ENCODE measurements at regions of chr19 and their contacts with region 1.

Region 1: GRCh38 chr19:39532233-39533002 is at the start of gene EID2B:
- DNase-seq: peak; percentile 91
- H3K4me3 ChIP-seq: peak within 1 kb of the TSS; percentile 65 to 85
- H3K27ac ChIP-seq: peak within 1 kb of the TSS; percentile 71 to 76
- H3K4me1 ChIP-seq: peaks cover 5% of the 10 kb centered on the region
- H3K27me3 ChIP-seq: no peaks in the 10 kb centered on the region
- CTCF ChIP-seq: peak; percentile 93 to 100 (median 99)
- POLR2A ChIP-seq: peak; percentile 62
- total RNA-seq, gene EID2B: 2.6 to 4.5 TPM

Region 2: DNA sequence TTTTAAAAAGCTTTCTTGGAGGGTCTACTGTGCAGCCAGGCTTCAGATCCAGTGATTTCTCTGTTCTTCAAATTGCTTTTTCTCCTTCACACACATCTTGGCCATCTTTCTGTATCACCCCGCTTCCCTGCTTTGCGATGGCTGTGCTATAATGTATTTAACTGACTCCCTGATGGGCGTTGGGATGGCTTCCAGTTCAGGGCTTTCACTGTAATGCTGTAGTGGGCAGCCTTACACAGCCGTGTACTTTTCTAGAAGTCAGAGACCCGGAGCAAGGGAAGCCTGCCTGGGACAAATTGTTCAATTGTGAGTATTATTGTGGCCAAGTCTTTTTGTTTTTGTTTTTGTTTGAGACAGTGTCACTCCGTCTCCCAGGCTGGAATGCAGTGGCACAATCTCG is 426.2 kb before region 1 on chr19:
- intact Hi-C with region 1: loop called (anchors 5 kb)
- DNase-seq: no peak
- H3K4me3 ChIP-seq: no peak overlapping the region
- H3K27ac ChIP-seq: no peak overlapping the region
- H3K4me1 ChIP-seq: no peaks in the 10 kb centered on the region
- H3K27me3 ChIP-seq: no peaks in the 10 kb centered on the region
- CTCF ChIP-seq: no peak
- POLR2A ChIP-seq: no peak

Region 3: DNA sequence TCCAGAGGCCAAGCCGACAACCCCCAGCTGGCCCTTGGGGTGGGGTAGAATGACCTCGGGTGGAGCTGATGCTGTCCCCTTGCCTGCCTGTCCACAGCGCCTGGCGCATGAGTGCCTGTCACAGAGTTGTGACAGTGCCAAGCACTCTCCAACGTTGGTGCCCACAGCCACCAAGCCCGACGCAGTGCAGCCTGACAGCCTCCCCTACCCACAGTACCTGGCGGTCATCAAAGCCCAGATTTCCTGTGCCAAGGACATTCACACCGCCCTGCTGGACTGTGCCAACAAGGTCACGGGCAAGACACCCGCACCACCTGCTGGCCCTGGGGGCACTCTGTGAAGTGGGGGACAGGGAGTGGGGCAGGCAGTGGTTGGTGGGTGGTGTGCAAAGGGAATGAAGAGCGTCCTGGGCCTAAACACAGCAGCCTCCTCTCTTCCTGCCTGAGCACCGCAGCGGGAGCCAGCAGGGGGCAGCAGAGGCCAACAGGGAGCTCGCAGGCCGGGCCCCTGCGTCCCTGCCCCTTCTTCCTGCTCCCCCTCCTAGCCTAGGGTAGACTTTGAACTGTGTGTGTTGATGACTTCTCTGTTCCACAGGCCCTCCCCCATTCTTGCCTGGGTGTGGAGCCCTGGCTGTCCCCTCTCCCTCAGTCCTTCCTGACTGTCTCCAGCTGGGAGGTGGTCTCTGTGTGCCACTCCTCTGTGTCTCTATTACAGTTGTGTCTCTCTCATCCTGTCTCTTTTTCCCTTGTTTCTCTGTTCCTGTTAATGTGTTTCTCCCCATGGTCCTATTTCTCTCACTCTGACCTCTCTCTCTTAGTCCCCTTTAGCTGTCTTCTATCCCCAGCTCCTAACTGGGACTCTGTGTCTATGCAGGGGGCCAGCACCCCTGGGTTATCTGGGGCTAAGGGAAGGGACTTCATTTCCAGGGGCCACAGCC is 134.8 kb before region 1 on chr19:
- intact Hi-C with region 1: loop called (anchors 5 kb)
- DNase-seq: peak; percentile 85
- H3K4me3 ChIP-seq: no peak overlapping the region
- H3K27ac ChIP-seq: peak overlapping the region; percentile 67 to 83
- H3K4me1 ChIP-seq: peaks cover 5% of the 10 kb centered on the region
- H3K27me3 ChIP-seq: no peaks in the 10 kb centered on the region
- CTCF ChIP-seq: peak; percentile 84 to 99 (median 99)
- POLR2A ChIP-seq: no peak

Region 4: DNA sequence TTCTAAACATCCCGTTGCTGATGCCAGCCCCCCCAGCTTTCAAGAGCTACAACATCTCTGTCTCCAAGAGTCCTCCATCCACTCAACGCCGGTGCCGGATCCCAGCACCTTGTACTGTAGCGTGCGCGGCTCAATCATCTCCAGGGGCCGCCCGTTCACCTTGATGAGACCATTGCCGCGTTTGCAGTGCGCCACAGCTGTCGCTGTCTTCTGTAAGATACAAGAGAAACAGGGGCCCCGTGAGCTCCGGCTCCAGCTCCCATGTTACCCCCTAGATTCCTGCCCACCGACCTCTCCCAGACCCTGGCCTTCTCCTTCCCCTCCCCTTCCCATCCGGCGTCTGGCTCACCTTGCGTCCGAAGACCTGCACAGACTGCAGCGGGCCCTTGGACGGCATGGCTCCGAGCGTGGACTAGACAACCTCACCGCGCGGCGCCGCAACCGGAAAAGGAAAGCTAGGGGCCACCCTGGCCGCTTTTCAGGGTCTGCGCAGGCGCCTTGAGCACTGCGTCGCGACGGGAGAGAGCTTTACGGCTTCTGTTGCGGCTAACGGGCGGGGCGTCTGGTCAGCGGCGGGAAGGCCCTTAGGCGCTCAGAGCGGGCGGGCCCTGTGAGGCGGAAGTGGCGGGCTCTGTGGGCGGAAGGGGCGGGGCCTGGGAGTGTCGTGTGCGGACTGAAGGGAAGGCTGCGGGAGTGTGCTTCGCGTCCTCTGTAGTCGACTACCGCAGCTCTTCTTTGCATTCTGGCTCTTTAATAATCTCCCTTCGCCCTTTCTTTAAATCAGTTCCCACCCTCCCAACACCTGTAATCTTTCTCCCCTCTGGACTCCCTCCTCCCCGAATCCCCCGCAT is 96.7 kb before region 1 on chr19 and contains the start of gene RPS16:
- intact Hi-C with region 1: loop called (anchors 5 kb)
- DNase-seq: peak; percentile 98
- H3K4me3 ChIP-seq: peak within 1 kb of the TSS; percentile 60 to 82
- H3K27ac ChIP-seq: peak within 1 kb of the TSS; percentile 76 to 87
- H3K4me1 ChIP-seq: peaks cover 16% of the 10 kb centered on the region
- H3K27me3 ChIP-seq: no peaks in the 10 kb centered on the region
- CTCF ChIP-seq: peak in 2 of 4 experiments; percentile 22 to 49
- POLR2A ChIP-seq: peak; percentile 89
- total RNA-seq, gene RPS16: 1,162 to 1,716 TPM

Region 5: DNA sequence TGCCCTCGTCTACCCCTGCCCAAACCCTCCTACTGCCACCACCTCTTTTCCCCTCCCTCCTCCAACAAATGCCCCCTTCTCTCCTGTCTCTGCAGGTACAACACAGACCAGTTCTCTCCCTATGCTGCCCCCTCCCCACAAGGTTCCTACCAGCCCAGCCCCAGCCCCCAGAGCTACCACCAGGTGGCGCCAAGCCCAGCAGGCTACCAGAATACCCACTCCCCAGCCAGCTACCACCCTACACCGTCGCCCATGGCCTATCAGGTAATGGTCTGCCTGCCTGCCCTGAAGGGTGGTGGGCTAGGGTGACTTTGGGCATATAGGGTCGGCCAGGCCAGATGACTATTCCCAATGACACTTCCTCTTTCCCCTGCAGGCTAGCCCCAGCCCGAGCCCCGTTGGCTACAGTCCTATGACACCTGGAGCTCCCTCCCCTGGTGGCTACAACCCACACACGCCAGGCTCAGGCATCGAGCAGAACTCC is 58.2 kb before region 1 on chr19:
- intact Hi-C with region 1: loop called (anchors 5 kb)
- DNase-seq: peak; percentile 29
- H3K4me3 ChIP-seq: no peak overlapping the region
- H3K27ac ChIP-seq: no peak overlapping the region
- H3K4me1 ChIP-seq: no peaks in the 10 kb centered on the region
- H3K27me3 ChIP-seq: no peaks in the 10 kb centered on the region
- CTCF ChIP-seq: peak; percentile 53 to 76 (median 60)
- POLR2A ChIP-seq: no peak

Region 6: GRCh38 chr19:39599116-39599515 is 66.7 kb after region 1 on chr19:
- intact Hi-C with region 1: no loop called
- DNase-seq: no peak
- H3K4me3 ChIP-seq: no peak overlapping the region
- H3K27ac ChIP-seq: no peak overlapping the region
- H3K4me1 ChIP-seq: no peaks in the 10 kb centered on the region
- H3K27me3 ChIP-seq: no peaks in the 10 kb centered on the region
- CTCF ChIP-seq: no peak
- POLR2A ChIP-seq: no peak